ENCODE measurements at regions of chr18 and their contacts with region 1.

Region 1: GRCh38 chr18:32110005-32110404 is 18.3 kb downstream of the RNF138 start:
- DNase-seq: no peak
- CTCF ChIP-seq: no peak

Region 2: DNA sequence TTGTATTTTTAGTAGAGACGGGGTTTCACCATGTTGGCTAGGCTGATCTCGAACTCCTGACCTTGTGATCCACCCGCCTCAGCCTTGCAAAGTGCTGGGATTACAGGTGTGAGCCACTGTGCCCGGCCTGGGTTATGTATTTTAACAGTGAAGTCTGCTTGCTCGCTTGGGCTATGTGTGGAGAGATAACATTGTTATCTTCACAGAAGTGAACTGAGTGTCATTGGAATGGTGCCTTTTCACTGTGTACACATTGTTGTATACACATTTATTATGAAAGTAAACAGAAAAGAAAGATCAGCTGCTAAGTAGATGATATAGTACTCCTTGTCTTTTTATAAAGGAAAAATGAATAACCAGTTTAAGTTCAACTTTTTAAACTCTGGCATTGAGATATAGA is 12.0 kb after region 1 on chr18:
- CTCF ChIA-PET with region 1: interaction called, 12 read pairs
- POLR2A ChIA-PET with region 1: no interaction called
- DNase-seq: no peak
- CTCF ChIP-seq: no peak

Region 3: DNA sequence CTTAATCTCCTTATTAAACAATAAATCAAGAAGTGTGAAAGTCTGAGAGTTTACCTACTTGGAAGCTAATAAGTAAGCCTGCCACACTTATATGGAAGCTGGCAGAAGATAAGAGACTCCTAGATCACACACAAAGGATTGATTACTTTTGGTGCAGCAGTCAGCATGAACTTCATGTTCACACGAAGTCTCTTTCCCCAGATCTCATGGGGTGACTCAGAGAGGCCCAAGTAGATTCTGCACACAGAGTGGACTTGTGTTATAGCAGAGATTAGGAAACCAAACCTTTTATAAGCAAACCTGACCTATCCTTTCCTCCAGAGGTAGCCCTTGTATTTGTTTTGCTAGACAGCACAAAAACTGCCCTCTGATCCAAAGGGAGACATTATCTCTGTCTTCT is 370.6 kb after region 1 on chr18:
- CTCF ChIA-PET with region 1: no interaction called
- POLR2A ChIA-PET with region 1: no interaction called
- DNase-seq: no peak
- CTCF ChIP-seq: no peak

Measured in GM10248 (cell line).